Activated T-helper 1 cell treated with anti-CD3 and anti-CD28 coated beads, Interleukin-12 subunit alpha, Interleukin-12 subunit beta, Interleukin-2, Interleukin-4 antibody, amounts not matched to agents 30 ng/mL and 10 ng/mL and 1 ng/mL, durations not matched to agents 14 hours and 24 hours and 36 hours (primary cell): ENCODE measurements at regions of chr7 and their contacts with region 1.

Region 1: GRCh38 chr7:4610768-4611467 is 71.2 kb upstream of the FOXK1 start:
- DNase-seq: peak; percentile 40
- H3K4me3 Mint-ChIP-seq: no peak overlapping the region
- H3K27ac Mint-ChIP-seq: no peak overlapping the region
- H3K4me1 Mint-ChIP-seq: peaks cover 17% of the 10 kb centered on the region
- H3K27me3 Mint-ChIP-seq: no peaks in the 10 kb centered on the region

Region 2: DNA sequence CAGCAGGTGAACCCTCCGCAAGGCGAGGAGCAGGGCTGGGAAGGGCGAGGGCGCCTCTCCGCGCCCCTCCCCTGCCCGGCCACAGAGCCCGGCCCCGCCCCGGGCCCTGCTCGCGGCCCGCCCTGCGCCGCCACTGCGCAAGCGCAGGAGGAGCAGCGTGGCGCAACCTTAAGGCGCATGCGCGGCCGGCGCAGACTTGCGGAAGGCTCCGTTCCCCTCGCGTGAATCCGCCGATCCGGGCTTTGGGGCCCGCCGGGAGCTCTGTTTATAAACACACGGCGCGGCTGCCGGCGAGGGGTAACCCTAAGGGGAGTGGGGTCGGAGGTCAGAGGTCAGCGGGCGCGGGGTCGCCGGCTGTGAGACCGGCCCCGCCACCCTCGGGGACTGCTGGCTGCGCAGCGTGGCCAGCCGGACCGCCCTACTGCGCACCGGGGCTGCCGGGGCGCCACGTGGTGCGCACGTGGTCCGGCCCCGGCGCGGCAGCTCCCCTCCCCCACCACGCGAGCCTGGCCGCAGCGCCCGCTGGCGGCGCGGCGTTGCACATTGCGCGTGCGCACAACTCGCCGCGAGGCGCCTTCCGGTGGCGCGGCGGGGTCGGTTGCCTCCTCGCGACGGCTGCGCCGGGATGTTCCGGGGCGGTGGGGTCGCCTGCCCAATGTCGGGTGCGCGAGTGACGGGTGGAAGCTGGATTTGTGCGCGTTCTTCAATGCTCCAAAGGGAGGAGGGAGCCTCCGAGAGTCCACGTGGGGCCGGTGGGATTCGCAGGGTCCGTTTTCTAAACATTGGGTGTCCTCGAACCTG is 30.9 kb after region 1 on chr7:
- intact Hi-C with region 1: loop called (anchors 2 kb)
- DNase-seq: peak; percentile 96
- H3K4me3 Mint-ChIP-seq: peak overlapping the region; percentile 93
- H3K27ac Mint-ChIP-seq: peak overlapping the region; percentile 86
- H3K4me1 Mint-ChIP-seq: peaks cover 19% of the 10 kb centered on the region
- H3K27me3 Mint-ChIP-seq: no peaks in the 10 kb centered on the region

Region 3: DNA sequence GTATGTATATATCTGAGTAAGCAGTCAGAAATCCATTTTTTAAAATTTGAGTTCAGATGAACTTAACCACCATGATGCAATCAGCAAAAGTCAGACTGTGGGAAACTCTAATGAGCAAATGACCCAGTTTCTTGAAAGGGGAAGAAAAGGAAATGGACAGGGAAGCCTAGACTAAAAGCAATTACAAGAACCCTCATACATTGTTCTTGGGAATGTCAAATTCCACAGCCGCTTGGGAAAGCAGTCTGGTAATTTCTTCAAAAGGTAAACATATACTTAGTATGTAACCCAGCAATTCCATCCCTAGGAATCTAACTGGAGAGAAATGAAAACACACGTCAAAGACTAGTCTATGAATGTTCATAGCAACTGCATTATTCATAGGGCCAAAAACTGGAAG is 54.7 kb after region 1 on chr7:
- intact Hi-C with region 1: no loop called
- DNase-seq: no peak
- H3K4me3 Mint-ChIP-seq: no peak overlapping the region
- H3K27ac Mint-ChIP-seq: no peak overlapping the region
- H3K4me1 Mint-ChIP-seq: peaks cover 10% of the 10 kb centered on the region
- H3K27me3 Mint-ChIP-seq: no peaks in the 10 kb centered on the region

Region 4: GRCh38 chr7:4753711-4754432 is 143.0 kb after region 1 on chr7:
- intact Hi-C with region 1: loop called (anchors 1 kb)
- DNase-seq: peak; percentile 73
- H3K4me3 Mint-ChIP-seq: no peak overlapping the region
- H3K27ac Mint-ChIP-seq: no peak overlapping the region
- H3K4me1 Mint-ChIP-seq: peaks cover 8% of the 10 kb centered on the region
- H3K27me3 Mint-ChIP-seq: no peaks in the 10 kb centered on the region

Region 5: DNA sequence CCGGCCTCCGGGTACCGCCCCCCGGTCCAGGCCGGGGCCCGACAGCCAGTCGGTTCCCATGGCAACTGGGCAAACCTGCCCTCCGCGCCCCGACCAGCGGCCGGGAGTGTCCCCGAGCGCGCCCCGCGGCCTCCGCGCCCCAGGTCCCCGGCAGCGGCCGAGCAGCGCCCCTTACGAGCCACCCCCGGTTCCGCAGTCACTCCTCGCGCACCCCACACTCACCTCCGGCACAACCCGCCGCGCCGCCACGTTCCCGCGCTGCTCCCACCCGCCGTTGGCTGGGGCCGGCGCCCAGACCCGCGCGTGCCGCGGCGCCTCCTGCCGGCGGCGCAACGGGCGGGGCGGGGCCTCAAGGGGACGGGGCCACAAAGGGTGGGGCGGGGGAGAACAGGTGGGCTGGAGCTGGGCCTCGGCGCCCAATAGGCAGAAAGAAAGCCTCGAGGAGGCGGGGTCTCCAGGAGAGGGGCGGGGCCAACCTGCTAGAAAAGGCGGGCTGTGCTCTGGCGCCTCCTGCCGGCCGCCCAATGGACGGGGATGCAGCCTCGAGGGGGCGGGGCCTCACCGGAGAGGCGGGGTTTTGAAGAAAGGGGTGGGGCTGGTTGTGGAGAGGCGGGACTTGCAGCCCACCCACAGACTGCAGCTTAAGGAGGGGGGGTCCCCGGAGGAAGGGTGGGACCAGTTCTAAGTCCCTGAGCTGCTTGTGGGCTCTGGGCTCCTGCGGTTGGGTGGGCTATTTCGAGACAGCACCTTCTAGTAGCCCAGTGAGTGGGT is 272.6 kb after region 1 on chr7 and contains the start of gene RADIL:
- intact Hi-C with region 1: loop called (anchors 10 kb)
- DNase-seq: peak; percentile 77
- H3K4me3 Mint-ChIP-seq: peak within 1 kb of the TSS; percentile 34
- H3K27ac Mint-ChIP-seq: no peak within 1 kb of the TSS
- H3K4me1 Mint-ChIP-seq: peaks cover 8% of the 10 kb centered on the region
- H3K27me3 Mint-ChIP-seq: peaks cover 26% of the 10 kb centered on the region
- total RNA-seq, gene RADIL: 0.24 and 0.26 TPM in 2 replicates